ENCODE measurements at regions of chr10 and their contacts with region 1.

Region 1: DNA sequence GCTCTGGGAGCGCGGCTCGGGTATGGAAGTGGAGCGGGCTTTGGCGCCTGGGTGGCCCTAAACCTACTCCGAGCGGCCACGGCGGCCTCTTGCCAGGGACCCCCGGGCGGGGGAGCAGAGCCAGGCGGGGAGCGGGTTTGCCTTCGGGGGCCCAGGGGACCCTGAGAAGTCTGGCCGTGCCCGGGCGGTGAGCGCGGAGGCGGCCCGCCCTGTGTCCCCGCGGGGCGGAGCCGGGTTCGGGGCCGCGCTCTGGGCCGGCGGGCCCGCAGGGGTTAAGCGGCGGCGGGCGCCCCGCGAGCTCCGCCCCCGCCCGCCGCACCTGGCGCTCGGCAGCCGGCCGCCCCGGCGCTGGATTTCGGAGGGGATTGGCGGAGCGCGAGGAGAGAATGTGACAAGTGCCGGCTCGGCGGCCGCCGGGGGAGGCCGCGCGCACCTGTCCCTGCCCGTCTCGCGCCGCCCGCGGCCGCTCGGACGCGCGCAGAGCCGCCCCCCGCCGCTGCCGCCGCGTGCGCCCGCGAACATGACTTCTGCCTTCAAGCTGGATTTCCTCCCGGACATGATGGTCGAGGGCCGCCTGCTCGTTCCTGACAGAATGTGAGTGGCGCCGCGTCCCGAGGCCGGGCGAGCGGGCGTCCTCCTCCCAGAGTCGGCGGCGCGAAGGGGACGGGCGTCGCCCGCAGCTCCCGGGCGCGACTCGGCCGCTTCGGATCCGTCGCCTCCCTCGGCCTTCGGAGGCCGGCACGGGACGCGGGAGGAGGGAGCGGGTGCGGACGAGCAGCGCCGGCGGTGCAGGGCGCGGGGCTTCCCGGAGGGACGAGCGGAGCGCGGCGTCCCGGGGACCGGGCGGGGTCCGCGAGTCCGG is at the start of gene CELF2:
- DNase-seq: peak; percentile 67 to 87 (median 86)
- ATAC-seq: peak; percentile 79
- H3K4me3 ChIP-seq: peak within 1 kb of the TSS; percentile 66
- H3K27ac ChIP-seq: peak within 1 kb of the TSS; percentile 94
- H3K4me1 ChIP-seq: peaks cover 4% of the 10 kb centered on the region
- H3K27me3 ChIP-seq: no peaks in the 10 kb centered on the region
- total RNA-seq, gene CELF2: 73.7 to 87.0 (median 81.1) TPM

Region 2: DNA sequence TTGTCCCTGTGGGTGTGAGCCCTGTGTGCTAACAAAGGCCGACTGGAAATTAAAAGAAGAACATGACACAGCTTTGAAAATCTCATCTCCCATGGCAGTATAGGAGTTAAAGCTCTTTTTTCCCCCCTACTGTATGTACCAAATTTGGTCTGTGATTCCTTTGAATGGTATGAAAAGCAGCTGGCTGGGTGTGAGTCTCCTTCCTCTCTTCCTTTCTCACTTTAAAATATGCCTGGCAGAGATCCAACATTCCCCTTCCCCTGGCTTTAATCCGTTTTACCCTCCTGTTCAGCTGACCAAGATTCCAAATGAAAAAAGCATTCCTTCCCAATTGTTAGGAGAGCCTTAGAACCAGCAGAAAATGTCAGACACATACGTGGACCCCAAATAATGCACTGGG is 225.1 kb before region 1 on chr10:
- intact Hi-C with region 1: loop called in 1 of 4 experiments (anchors 10 kb)
- DNase-seq: no peak
- ATAC-seq: peak; percentile 53 to 66
- H3K4me3 ChIP-seq: no peak overlapping the region
- H3K27ac ChIP-seq: no peak overlapping the region
- H3K4me1 ChIP-seq: peaks cover 2% of the 10 kb centered on the region
- H3K27me3 ChIP-seq: no peaks in the 10 kb centered on the region

Region 3: GRCh38 chr10:10911471-10911921 is 106.3 kb before region 1 on chr10:
- intact Hi-C with region 1: loop called in 1 of 4 experiments (anchors 10 kb)
- DNase-seq: peak; percentile 77 to 85 (median 80)
- ATAC-seq: peak; percentile 83 to 90
- H3K4me3 ChIP-seq: peak overlapping the region; percentile 32
- H3K27ac ChIP-seq: peak overlapping the region; percentile 85
- H3K4me1 ChIP-seq: no peaks in the 10 kb centered on the region
- H3K27me3 ChIP-seq: no peaks in the 10 kb centered on the region

Measured in right cardiac atrium (tissue), 5 donors.